T-cell (primary cell): ENCODE measurements at regions of chr13 and their contacts with region 1.

Region 1: GRCh38 chr13:98397221-98397620 is 179.7 kb downstream of the STK24 start:
- DNase-seq: no peak
- ATAC-seq: no peak
- H3K4me3 ChIP-seq: no peak overlapping the region
- H3K4me3 Mint-ChIP-seq: no peak overlapping the region
- H3K27ac ChIP-seq: no peak overlapping the region
- H3K27ac Mint-ChIP-seq: no peak overlapping the region
- H3K4me1 ChIP-seq: no peaks in the 10 kb centered on the region
- H3K4me1 Mint-ChIP-seq: no peaks in the 10 kb centered on the region
- H3K27me3 ChIP-seq: peaks cover 0 to 19% of the 10 kb centered on the region in 2 experiments
- H3K27me3 Mint-ChIP-seq: peaks cover 11 to 12% of the 10 kb centered on the region in 2 donors

Region 2: GRCh38 chr13:98575009-98575903 is 178.0 kb after region 1 on chr13:
- CTCF ChIA-PET with region 1: no interaction called
- POLR2A ChIA-PET with region 1: no interaction called
- DNase-seq: peak in 1 of 35 experiments; percentile 44
- ATAC-seq: no peak
- H3K4me3 ChIP-seq: peak overlapping the region; percentile 75 to 83
- H3K4me3 Mint-ChIP-seq: peak overlapping the region; percentile 89 to 93 (median 90)
- H3K27ac ChIP-seq: peak overlapping the region; percentile 86
- H3K27ac Mint-ChIP-seq: peak overlapping the region; percentile 94 to 96
- H3K4me1 ChIP-seq: peaks cover 36 to 38% of the 10 kb centered on the region in 2 experiments
- H3K4me1 Mint-ChIP-seq: peaks cover 53 to 58% (median 55%) of the 10 kb centered on the region in 3 donors
- H3K27me3 ChIP-seq: no peaks in the 10 kb centered on the region
- H3K27me3 Mint-ChIP-seq: no peaks in the 10 kb centered on the region

Region 3: DNA sequence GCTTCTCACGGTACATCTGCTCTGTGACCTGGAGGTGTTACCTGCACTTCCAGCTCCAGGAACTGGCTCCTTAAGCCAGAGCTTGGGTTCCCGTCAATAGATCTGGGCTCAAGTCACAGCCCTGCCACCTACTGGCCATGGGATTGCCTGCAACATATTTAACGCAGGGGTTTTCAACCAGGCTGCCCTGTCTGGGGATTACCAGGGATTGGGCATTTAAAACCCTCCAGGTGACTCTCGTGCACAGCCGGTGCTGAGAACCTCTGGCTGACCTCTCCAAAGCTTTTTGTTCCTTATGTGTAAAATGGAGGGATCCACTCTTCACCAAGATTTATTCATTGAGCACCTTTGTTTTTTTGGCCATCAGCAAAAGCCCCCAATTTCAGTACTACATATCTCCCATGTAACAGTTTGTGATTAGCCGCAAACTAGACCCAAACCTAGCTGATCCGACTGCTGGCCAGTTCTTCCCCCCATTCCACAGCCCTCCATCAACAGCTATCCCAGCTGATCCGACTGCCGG is 256.3 kb after region 1 on chr13:
- CTCF ChIA-PET with region 1: interaction called in 1 of 2 experiments, 3 read pairs
- POLR2A ChIA-PET with region 1: interaction called in 1 of 2 experiments, 16 read pairs
- DNase-seq: peak; percentile 35 to 82 (median 62)
- ATAC-seq: peak; percentile 83 to 91 (median 88)
- H3K4me3 ChIP-seq: no peak overlapping the region
- H3K4me3 Mint-ChIP-seq: peak overlapping the region in 2 of 3 donors; percentile 44 to 48
- H3K27ac ChIP-seq: no peak overlapping the region
- H3K27ac Mint-ChIP-seq: no peak overlapping the region
- H3K4me1 ChIP-seq: peaks cover 2 to 7% of the 10 kb centered on the region in 2 experiments
- H3K4me1 Mint-ChIP-seq: peaks cover 3 to 6% (median 3%) of the 10 kb centered on the region in 3 donors
- H3K27me3 ChIP-seq: peaks cover 0 to 11% of the 10 kb centered on the region in 2 experiments
- H3K27me3 Mint-ChIP-seq: peaks cover 4% of the 10 kb centered on the region in 2 donors